Activated CD8-positive, alpha-beta memory T cell treated with anti-CD3 and anti-CD28 coated beads, Interleukin-2, amount 10 ng/mL, durations not matched to agents 7 days and 5 days (primary cell): ENCODE measurements at regions of chr2 and their contacts with region 1.

Region 1: DNA sequence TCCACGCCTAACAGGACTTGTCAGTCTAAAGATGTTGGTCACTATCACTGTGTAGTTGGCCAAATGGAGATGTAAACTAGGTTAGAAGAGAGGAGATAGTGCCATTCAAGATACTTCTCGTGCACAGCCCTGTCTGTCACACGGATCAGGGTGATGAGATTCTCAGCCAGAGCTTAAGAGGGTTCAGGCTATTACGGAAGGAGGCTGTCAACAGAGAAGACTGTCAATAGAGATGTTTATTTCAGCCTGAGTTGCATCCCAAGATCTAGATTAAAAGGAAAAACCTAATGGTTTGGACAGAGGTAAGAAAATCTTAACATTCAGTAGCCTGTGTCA is 83.4 kb downstream of the AAK1 start:
- DNase-seq: no peak
- ATAC-seq: no peak
- H3K4me3 Mint-ChIP-seq: no peak overlapping the region
- H3K27ac Mint-ChIP-seq: no peak overlapping the region
- H3K4me1 Mint-ChIP-seq: peaks cover 30% of the 10 kb centered on the region
- H3K27me3 Mint-ChIP-seq: no peaks in the 10 kb centered on the region

Region 2: DNA sequence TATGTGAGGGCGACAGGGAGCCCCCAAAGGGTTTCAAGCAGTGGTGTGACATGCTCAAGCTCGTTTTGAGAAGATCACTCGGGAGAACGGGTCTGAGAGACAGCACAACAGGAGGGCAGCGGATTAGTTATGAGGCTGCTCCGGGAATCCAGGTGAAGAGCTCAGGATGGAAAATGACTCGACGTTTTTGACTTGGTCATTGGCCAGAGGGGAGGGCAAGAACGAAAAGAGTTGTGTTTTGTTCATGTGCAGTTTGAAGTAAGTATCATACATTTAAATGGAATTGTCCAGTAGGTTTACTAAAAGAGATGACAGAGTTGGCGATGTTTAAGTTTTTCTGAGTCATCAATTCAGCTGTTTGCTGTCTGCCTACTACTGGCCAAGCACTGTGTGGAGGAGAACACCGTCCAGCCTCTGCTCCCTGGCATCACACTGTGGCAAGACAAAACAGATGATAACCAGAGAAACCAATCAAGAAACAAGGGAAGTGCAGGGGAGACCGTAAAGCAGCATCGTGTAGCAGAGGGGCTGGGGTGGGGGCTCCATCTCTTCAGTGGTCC is 156.5 kb after region 1 on chr2:
- CTCF ChIA-PET with region 1: interaction called, 12 read pairs
- DNase-seq: no peak
- ATAC-seq: no peak
- H3K4me3 Mint-ChIP-seq: no peak overlapping the region
- H3K27ac Mint-ChIP-seq: no peak overlapping the region
- H3K4me1 Mint-ChIP-seq: peaks cover 18% of the 10 kb centered on the region
- H3K27me3 Mint-ChIP-seq: peaks cover 2% of the 10 kb centered on the region